ENCODE measurements at regions of chr11 and their contacts with region 1.

Region 1: GRCh38 chr11:66429983-66430602 is 8.6 kb downstream of the MRPL11 start:
- DNase-seq: no peak
- H3K4me3 ChIP-seq: no peak overlapping the region
- H3K27ac ChIP-seq: no peak overlapping the region
- H3K4me1 ChIP-seq: peaks cover 0 to 3% (median 0%) of the 10 kb centered on the region in 4 donors
- H3K27me3 ChIP-seq: no peaks in the 10 kb centered on the region
- CTCF ChIP-seq: peak; percentile 87 to 94 (median 88)
- EP300 ChIP-seq: no peak
- POLR2A ChIP-seq: no peak

Region 2: GRCh38 chr11:66408488-66409214 is 21.4 kb before region 1 on chr11:
- intact Hi-C with region 1: loop called (anchors 1 kb)
- DNase-seq: peak; percentile 96
- H3K4me3 ChIP-seq: peak overlapping the region; percentile 55 to 70 (median 60)
- H3K27ac ChIP-seq: peak overlapping the region; percentile 83 to 87 (median 85)
- H3K4me1 ChIP-seq: peaks cover 6 to 56% (median 51%) of the 10 kb centered on the region in 4 donors
- H3K27me3 ChIP-seq: peaks cover 0 to 9% (median 0%) of the 10 kb centered on the region in 4 donors
- CTCF ChIP-seq: peak in 2 of 3 experiments; percentile 100
- EP300 ChIP-seq: peak; percentile 36
- POLR2A ChIP-seq: no peak